ENCODE measurements at regions of chr2 and their contacts with region 1.

Region 1: GRCh38 chr2:121095257-121096080 is 189.5 kb downstream of the TFCP2L1 start:
- DNase-seq: peak; percentile 45 to 77 (median 64)
- ATAC-seq: peak; percentile 18 to 48 (median 36)
- H3K4me3 ChIP-seq: no peak overlapping the region
- H3K27ac ChIP-seq: no peak overlapping the region
- H3K4me1 ChIP-seq: peaks cover 0 to 11% (median 2%) of the 10 kb centered on the region in 12 donors
- H3K27me3 ChIP-seq: no peaks in the 10 kb centered on the region
- CTCF ChIP-seq: peak; percentile 53 to 68 (median 59)
- POLR2A ChIP-seq: no peak

Region 2: DNA sequence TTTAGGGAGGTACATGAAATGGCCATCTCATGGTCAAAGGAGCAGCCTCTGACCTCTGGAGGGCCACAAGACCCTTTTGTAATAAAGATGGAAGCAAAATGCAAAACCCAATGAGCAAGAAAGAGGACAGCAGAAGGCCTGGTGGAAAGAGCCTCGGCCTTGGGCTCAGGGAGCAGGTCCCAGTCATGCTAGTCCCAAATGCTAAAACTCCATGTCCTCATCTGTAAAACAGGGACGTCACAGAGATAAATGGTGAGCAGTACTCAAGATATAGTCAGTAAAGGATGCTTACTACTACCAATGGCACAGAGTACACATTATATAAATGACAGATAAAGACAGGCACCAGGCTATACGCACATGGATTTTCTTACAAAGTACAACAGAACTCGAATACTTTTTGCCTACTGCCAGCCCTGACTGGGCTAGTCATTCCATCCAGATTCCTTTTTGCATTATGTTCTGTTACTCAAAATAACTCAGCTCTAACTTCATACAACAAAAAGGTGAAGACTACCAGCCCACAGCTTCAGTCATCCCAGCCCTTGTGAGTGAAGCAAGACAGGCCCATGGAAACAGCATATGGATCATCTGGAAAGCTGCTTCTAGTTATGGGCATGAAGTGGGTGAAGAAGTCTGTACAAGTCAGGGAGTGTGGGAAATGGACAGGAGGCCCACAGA is 254.4 kb after region 1 on chr2:
- intact Hi-C with region 1: loop called in 6 of 10 experiments (anchors 5 to 10 kb)
- DNase-seq: no peak
- ATAC-seq: peak; percentile 61 to 87 (median 70)
- H3K4me3 ChIP-seq: no peak overlapping the region
- H3K27ac ChIP-seq: peak overlapping the region in 11 of 12 donors; percentile 50 to 94 (median 79)
- H3K4me1 ChIP-seq: peaks cover 0 to 22% (median 7%) of the 10 kb centered on the region in 12 donors
- H3K27me3 ChIP-seq: no peaks in the 10 kb centered on the region
- CTCF ChIP-seq: no peak
- POLR2A ChIP-seq: no peak

Region 3: DNA sequence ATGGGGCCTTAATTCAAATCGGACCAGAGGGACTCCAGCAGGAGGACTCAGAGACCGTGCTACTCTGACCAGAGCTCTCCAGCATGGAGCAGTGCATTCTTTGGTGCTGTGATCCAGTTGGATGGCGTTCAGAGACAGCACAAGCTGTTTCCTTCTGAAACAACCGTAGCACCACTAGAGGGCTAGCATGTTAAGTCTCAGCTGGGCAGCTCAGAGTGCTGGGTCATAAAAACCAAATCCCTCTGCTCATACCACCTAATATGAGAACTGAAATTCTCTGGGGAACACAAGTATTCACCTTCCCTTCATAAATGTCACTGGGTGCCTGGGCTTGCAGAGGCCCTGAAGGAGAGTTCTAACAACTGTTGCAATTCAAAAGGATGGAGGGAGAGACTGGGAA is 287.3 kb after region 1 on chr2:
- intact Hi-C with region 1: no loop called
- DNase-seq: no peak
- ATAC-seq: no peak
- H3K4me3 ChIP-seq: no peak overlapping the region
- H3K27ac ChIP-seq: no peak overlapping the region
- H3K4me1 ChIP-seq: peaks cover 0 to 5% (median 0%) of the 10 kb centered on the region in 12 donors
- H3K27me3 ChIP-seq: no peaks in the 10 kb centered on the region
- CTCF ChIP-seq: no peak
- POLR2A ChIP-seq: no peak

Measured in heart left ventricle (tissue), 16 donors.